ENCODE measurements at regions of chrX and their contacts with region 1.

Region 1: GRCh38 chrX:44843318-44843702 is 511 bp upstream of the DUSP21 start:
- DNase-seq: no peak
- ATAC-seq: no peak
- H3K4me3 ChIP-seq: no peak overlapping the region
- H3K27ac ChIP-seq: no peak overlapping the region
- H3K4me1 ChIP-seq: 0 out of 2 replicates have a peak, but pooled peaks cover 7% of the 10 kb centered on the region
- H3K27me3 ChIP-seq: no peaks in the 10 kb centered on the region
- CTCF ChIP-seq: no peak
- EP300 ChIP-seq: no peak
- POLR2A ChIP-seq: no peak
- RAD21 ChIP-seq: no peak

Region 2: GRCh38 chrX:44570522-44570921 is 272.8 kb before region 1 on chrX:
- CTCF ChIA-PET with region 1: no interaction called
- POLR2A ChIA-PET with region 1: no interaction called
- in situ Hi-C with region 1: no loop called
- intact Hi-C with region 1: no loop called
- DNase-seq: no peak
- ATAC-seq: no peak
- H3K4me3 ChIP-seq: no peak overlapping the region
- H3K27ac ChIP-seq: no peak overlapping the region
- H3K4me1 ChIP-seq: no peaks in the 10 kb centered on the region
- H3K27me3 ChIP-seq: no peaks in the 10 kb centered on the region
- CTCF ChIP-seq: no peak
- EP300 ChIP-seq: no peak
- POLR2A ChIP-seq: no peak
- RAD21 ChIP-seq: no peak

Region 3: DNA sequence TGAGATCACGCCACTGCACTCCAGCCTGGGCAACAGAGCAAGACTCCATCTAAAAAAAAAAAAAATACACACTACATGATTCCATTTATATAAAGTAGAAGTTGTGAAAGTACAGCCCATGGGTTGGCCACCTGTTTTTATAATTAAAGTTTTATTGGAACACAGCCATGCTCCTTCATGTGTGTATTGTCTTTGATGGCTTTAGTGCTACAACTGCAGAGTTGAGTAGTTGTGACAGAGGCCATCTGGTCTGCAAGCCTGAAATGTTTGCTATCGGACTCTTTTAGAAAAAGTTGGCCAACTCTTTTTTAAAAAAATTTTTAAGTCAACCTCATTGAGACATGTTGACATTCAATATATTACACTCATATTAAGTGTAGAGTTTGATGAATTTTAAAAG is 40.7 kb before region 1 on chrX:
- CTCF ChIA-PET with region 1: no interaction called
- POLR2A ChIA-PET with region 1: no interaction called
- in situ Hi-C with region 1: no loop called
- intact Hi-C with region 1: no loop called
- DNase-seq: no peak
- ATAC-seq: no peak
- H3K4me3 ChIP-seq: no peak overlapping the region
- H3K27ac ChIP-seq: no peak overlapping the region
- H3K4me1 ChIP-seq: no peaks in the 10 kb centered on the region
- H3K27me3 ChIP-seq: no peaks in the 10 kb centered on the region
- CTCF ChIP-seq: no peak
- EP300 ChIP-seq: no peak
- POLR2A ChIP-seq: no peak
- RAD21 ChIP-seq: no peak

Region 4: GRCh38 chrX:44822601-44823000 is 20.7 kb before region 1 on chrX:
- CTCF ChIA-PET with region 1: no interaction called
- POLR2A ChIA-PET with region 1: no interaction called
- in situ Hi-C with region 1: no loop called
- intact Hi-C with region 1: loop called (anchors 2 kb)
- DNase-seq: no peak
- ATAC-seq: peak; percentile 55
- H3K4me3 ChIP-seq: no peak overlapping the region
- H3K27ac ChIP-seq: no peak overlapping the region
- H3K4me1 ChIP-seq: peaks cover 16% of the 10 kb centered on the region
- H3K27me3 ChIP-seq: no peaks in the 10 kb centered on the region
- CTCF ChIP-seq: no peak
- EP300 ChIP-seq: no peak
- POLR2A ChIP-seq: no peak
- RAD21 ChIP-seq: no peak

Region 5: GRCh38 chrX:45110494-45110893 is 267.2 kb after region 1 on chrX:
- CTCF ChIA-PET with region 1: no interaction called
- POLR2A ChIA-PET with region 1: no interaction called
- in situ Hi-C with region 1: no loop called
- intact Hi-C with region 1: no loop called
- DNase-seq: no peak
- ATAC-seq: no peak
- H3K4me3 ChIP-seq: no peak overlapping the region
- H3K27ac ChIP-seq: no peak overlapping the region
- H3K4me1 ChIP-seq: no peaks in the 10 kb centered on the region
- H3K27me3 ChIP-seq: no peaks in the 10 kb centered on the region
- CTCF ChIP-seq: no peak
- EP300 ChIP-seq: no peak
- POLR2A ChIP-seq: no peak
- RAD21 ChIP-seq: no peak

Region 6: GRCh38 chrX:45363596-45363995 is 520.3 kb after region 1 on chrX:
- CTCF ChIA-PET with region 1: no interaction called
- POLR2A ChIA-PET with region 1: no interaction called
- in situ Hi-C with region 1: no loop called
- intact Hi-C with region 1: no loop called
- DNase-seq: no peak
- ATAC-seq: no peak
- H3K4me3 ChIP-seq: no peak overlapping the region
- H3K27ac ChIP-seq: no peak overlapping the region
- H3K4me1 ChIP-seq: no peaks in the 10 kb centered on the region
- H3K27me3 ChIP-seq: no peaks in the 10 kb centered on the region
- CTCF ChIP-seq: no peak
- EP300 ChIP-seq: no peak
- POLR2A ChIP-seq: no peak
- RAD21 ChIP-seq: no peak

Measured in HepG2 (cell line).